AG04449 (cell line): ENCODE measurements at regions of chr3 and their contacts with region 1.

Region 1: GRCh38 chr3:120245386-120245785 is 39.6 kb downstream of the GPR156 start:
- DNase-seq: no peak
- H3K4me3 ChIP-seq: no peak overlapping the region
- CTCF ChIP-seq: no peak

Region 2: DNA sequence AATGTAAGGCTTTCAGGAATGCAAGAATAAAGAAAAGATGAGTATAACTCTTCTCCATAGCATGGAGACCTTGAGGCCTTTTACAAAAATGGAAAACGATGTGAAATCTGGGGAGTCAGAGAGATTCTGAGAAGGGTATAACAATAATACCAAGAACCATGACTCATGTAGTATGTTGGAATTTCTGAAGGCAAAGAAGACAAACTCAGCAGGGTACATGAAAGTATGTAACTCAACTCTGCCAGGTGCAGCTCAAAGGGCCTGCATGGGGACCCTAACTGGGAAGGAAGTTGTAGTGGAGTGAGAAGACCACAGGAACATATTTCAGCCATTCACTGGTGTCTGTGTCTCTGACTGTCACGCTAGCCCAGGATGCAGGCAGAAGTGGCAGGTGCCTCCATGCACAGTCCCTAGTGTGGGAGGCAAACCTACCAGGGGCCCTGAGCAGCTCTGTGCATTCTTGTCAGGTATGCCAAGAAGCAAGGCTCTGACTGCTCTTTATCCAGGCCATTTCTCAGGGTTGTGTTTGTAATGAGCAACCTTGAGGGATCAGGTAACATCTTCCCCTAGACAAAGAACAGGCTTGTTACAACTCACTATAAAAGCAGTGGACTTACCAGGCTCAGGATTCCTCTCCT is 17.6 kb before region 1 on chr3:
- CTCF ChIA-PET with region 1: interaction called, 10 read pairs
- POLR2A ChIA-PET with region 1: no interaction called
- DNase-seq: no peak
- H3K4me3 ChIP-seq: no peak overlapping the region
- CTCF ChIP-seq: no peak

Region 3: DNA sequence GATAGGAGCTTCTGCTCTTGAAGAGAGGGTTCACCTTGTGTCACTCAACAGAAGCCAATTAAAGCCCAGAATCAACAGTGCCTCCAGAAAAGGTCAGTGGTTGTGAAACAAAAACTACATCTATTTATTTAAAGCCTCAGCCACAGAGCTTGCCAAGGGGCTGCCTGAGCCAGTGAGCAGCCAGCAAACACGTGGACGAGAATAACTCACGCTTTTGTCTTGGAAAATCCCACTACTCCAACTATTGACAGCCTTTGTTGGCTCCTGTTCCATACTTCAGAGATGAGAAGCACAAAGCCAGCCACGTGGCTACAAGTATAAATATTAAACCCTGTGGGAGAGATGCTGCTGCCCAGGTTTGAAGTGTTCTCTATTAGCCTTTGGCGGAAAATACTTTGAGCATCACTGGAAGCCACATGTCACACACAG is 29.4 kb after region 1 on chr3:
- CTCF ChIA-PET with region 1: interaction called, 13 read pairs
- POLR2A ChIA-PET with region 1: no interaction called
- DNase-seq: no peak
- H3K4me3 ChIP-seq: no peak overlapping the region
- CTCF ChIP-seq: no peak

Region 4: DNA sequence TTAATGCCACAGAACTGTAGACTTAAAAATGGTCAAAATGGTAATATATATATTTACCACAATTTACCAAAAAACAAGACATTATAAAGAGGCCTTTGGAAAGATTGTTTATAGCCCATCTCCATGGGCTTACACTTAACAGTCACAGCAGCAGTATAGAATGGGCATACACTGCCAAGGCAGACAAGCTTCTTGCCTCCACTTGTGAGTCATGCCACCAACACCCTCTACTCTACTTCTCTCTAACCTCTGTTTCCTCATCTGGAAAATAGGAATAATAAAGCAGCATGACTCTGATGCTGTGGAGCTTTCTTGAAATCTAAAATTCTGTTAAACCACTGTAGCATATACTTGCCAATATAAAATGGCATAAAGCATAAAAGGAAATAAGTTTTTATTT is 54.0 kb after region 1 on chr3:
- CTCF ChIA-PET with region 1: interaction called, 10 read pairs
- POLR2A ChIA-PET with region 1: no interaction called
- DNase-seq: no peak
- H3K4me3 ChIP-seq: no peak overlapping the region
- CTCF ChIP-seq: no peak

Region 5: GRCh38 chr3:120357807-120358206 is 112.4 kb after region 1 on chr3:
- CTCF ChIA-PET with region 1: no interaction called
- POLR2A ChIA-PET with region 1: no interaction called
- DNase-seq: no peak
- H3K4me3 ChIP-seq: no peak overlapping the region
- CTCF ChIP-seq: no peak

Region 6: DNA sequence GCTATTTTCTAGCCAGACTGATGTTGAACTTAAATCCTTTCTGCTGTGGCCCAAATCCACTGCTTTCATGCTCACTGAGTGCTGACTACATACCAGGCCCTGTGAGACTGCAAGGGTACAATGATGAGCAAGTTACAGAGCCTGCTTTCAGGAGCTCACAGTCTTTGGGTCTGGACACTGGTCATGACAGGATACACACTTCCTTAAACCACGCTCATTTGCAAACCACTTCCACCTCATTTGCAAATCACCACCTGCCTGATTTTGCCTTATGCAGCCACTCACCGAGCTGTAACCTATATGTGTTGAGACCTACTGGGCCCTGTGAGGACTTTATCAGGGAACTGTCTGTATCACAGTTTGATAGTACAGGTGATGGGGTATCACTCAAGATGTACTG is 154.0 kb after region 1 on chr3:
- CTCF ChIA-PET with region 1: interaction called, 42 read pairs
- POLR2A ChIA-PET with region 1: no interaction called
- DNase-seq: no peak
- H3K4me3 ChIP-seq: no peak overlapping the region
- CTCF ChIP-seq: no peak

Region 7: GRCh38 chr3:120498556-120499346 is 253.4 kb after region 1 on chr3:
- CTCF ChIA-PET with region 1: no interaction called
- POLR2A ChIA-PET with region 1: no interaction called
- DNase-seq: peak; percentile 99
- H3K4me3 ChIP-seq: no peak overlapping the region
- CTCF ChIP-seq: no peak

Region 8: GRCh38 chr3:120567370-120568201 is 322.2 kb after region 1 on chr3:
- CTCF ChIA-PET with region 1: interaction called, 18 read pairs
- POLR2A ChIA-PET with region 1: no interaction called
- DNase-seq: no peak
- H3K4me3 ChIP-seq: no peak overlapping the region
- CTCF ChIP-seq: peak; percentile 42